ENCODE measurements at regions of chr20 and their contacts with region 1.

Region 1: DNA sequence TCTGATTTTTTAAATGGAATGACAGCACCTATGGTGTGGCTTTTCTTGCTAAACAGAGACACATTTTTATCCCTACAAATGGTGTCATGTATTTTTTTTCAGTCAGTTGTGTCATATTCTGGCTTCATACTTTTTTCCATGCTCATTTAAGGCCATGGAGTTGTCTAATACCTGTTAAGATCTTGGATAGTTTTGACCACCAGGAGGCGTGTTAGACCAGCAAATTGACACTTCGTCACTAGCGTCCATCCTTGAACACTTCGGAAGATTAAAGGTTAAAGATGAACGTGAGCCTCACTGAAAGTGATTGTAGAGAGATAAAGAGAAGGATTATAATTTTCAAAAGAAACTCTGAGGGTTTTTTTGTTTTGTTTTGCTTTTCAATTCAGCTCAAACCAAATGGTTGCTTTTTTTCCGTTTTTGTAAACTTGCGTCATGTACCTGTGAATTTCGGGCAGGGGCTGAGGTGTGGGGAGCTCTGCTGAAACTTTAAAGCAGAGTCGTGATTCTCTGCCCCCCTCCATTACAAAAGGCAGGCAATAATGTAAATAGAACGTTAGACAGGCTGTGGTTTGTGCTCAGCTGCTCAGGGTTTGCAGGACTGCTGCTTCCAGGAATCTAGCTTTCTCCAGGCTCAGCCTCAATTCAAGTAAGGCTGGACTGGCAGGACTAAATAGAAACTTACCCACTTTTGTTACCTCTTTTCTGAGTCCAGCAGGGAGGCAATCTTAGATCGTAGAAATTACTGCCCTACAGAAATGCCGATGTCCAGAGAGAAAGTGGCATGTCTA is 245.1 kb downstream of the FOXA2 start:
- DNase-seq: no peak
- H3K4me3 ChIP-seq: no peak overlapping the region
- H3K27ac ChIP-seq: no peak overlapping the region
- H3K4me1 ChIP-seq: no peaks in the 10 kb centered on the region
- H3K27me3 ChIP-seq: peaks cover 69% of the 10 kb centered on the region
- CTCF ChIP-seq: peak; percentile 78

Region 2: DNA sequence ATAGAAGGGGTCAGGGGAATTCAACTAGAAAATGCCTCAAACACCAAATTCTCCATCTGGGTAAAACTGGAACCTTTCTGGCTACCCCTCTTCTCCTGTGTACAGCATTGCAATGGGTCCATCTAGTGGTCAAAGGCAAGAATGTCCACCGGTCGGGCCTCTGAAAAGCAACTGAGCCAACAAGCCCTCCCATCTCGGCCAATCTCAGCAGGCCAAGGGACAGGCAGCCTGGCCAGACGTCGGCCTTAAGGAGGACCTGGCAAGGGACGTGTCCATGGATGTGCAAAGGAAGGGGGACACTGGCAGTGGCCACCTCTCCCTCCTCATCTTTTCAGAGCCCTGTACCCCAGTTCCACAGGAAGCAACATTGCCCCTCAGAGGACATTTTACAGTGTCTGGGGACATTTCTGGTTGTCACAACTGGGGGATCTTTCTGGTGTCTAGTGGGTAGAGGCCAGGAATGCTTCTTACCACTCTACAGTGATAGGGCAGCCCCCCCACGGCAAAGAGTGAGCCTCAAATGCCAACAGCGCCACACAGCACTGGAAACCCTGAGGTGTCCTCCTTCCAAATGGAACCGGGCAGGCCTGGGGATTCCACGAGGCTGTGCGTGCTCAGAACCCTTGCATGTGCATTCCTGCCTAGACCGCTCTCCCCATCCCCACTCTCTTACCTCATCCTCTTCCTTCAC is 344.9 kb after region 1 on chr20:
- intact Hi-C with region 1: loop called (anchors 5 kb)
- DNase-seq: peak; percentile 48
- H3K4me3 ChIP-seq: no peak overlapping the region
- H3K27ac ChIP-seq: no peak overlapping the region
- H3K4me1 ChIP-seq: peaks cover 13% of the 10 kb centered on the region
- H3K27me3 ChIP-seq: peaks cover 41% of the 10 kb centered on the region
- CTCF ChIP-seq: peak; percentile 92

Measured in left ventricle myocardium inferior (tissue), 1 donor.